Caco-2 (cell line): ENCODE measurements at regions of chr20 and their contacts with region 1.

Region 1: GRCh38 chr20:15930311-15931305 is 642.6 kb downstream of the KIF16B start:
- DNase-seq: peak in 1 of 2 experiments; percentile 43
- H3K4me3 ChIP-seq: no peak overlapping the region
- H3K4me3 Mint-ChIP-seq: no peak overlapping the region
- H3K27ac Mint-ChIP-seq: no peak overlapping the region
- H3K4me1 ChIP-seq: no peaks in the 10 kb centered on the region
- H3K4me1 Mint-ChIP-seq: peaks cover 7% of the 10 kb centered on the region
- H3K27me3 ChIP-seq: no peaks in the 10 kb centered on the region
- H3K27me3 Mint-ChIP-seq: no peaks in the 10 kb centered on the region
- CTCF ChIP-seq: peak; percentile 53 to 67

Region 2: DNA sequence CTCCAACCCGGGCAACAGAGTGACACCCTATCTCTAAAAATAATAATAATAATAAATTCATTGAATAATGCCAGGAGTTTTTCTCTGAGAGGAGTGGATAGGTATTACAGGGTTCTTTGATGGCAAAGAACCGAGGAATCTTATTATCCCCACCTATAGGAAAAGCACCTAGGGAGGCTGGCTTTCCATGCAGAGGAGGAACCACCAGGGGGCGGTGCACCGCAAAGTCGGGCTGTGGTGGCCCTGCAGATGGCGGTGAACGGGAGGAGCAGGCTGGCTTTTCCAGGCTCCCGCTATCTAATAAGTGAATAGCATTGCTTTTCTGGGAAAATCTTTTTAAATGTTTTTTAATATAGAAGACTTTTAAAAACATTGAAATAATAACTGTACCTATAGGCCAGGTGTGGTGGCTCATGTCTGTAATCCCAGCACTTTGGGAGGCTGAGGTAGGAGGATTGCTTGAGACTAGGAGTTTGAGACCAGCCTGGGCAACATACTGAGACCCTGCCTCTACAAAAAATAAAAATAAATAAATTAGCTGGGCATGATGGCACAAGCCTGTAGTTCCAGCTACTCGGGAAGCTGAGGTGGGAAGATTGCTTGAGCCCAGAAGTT is 221.5 kb before region 1 on chr20:
- CTCF ChIA-PET with region 1: no interaction called
- POLR2A ChIA-PET with region 1: no interaction called
- intact Hi-C with region 1: loop called (anchors 10 kb)
- DNase-seq: peak; percentile 43 to 62
- H3K4me3 ChIP-seq: no peak overlapping the region
- H3K4me3 Mint-ChIP-seq: no peak overlapping the region
- H3K27ac Mint-ChIP-seq: no peak overlapping the region
- H3K4me1 ChIP-seq: peaks cover 8% of the 10 kb centered on the region; the same call in 1 of the 2 replicates
- H3K4me1 Mint-ChIP-seq: peaks cover 14% of the 10 kb centered on the region
- H3K27me3 ChIP-seq: no peaks in the 10 kb centered on the region
- H3K27me3 Mint-ChIP-seq: no peaks in the 10 kb centered on the region
- CTCF ChIP-seq: peak; percentile 30 to 45

Region 3: DNA sequence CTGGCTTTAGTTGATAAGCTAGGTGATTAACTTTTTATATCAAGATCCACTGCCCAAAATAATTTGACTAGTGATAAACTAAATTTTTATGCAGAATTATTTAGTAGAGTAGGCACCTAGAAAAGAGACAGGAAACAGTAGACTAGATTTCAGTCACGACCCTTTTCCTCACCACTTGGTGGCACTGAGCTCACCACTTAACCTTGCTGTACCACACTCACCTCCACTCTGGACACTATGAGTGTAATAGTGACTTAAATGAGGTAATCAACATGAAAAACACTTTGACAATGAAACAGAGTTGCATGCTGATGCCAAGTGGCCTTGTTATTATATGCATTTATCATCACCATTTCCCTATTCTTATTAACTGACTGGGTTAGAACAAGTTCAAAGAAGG is 87.7 kb before region 1 on chr20:
- CTCF ChIA-PET with region 1: no interaction called
- POLR2A ChIA-PET with region 1: no interaction called
- intact Hi-C with region 1: loop called (anchors 5 kb)
- DNase-seq: no peak
- H3K4me3 ChIP-seq: no peak overlapping the region
- H3K4me3 Mint-ChIP-seq: no peak overlapping the region
- H3K27ac Mint-ChIP-seq: no peak overlapping the region
- H3K4me1 ChIP-seq: no peaks in the 10 kb centered on the region; the same call in 1 of the 2 replicates
- H3K4me1 Mint-ChIP-seq: no peaks in the 10 kb centered on the region
- H3K27me3 ChIP-seq: no peaks in the 10 kb centered on the region
- H3K27me3 Mint-ChIP-seq: peaks cover 3% of the 10 kb centered on the region
- CTCF ChIP-seq: peak in 1 of 2 experiments; percentile 11

Region 4: GRCh38 chr20:16241915-16242314 is 311.3 kb after region 1 on chr20:
- CTCF ChIA-PET with region 1: no interaction called
- POLR2A ChIA-PET with region 1: no interaction called
- intact Hi-C with region 1: loop called (anchors 10 kb)
- DNase-seq: peak in 1 of 2 experiments; percentile 30
- H3K4me3 ChIP-seq: no peak overlapping the region
- H3K4me3 Mint-ChIP-seq: no peak overlapping the region
- H3K27ac Mint-ChIP-seq: no peak overlapping the region
- H3K4me1 ChIP-seq: no peaks in the 10 kb centered on the region
- H3K4me1 Mint-ChIP-seq: peaks cover 6% of the 10 kb centered on the region
- H3K27me3 ChIP-seq: no peaks in the 10 kb centered on the region
- H3K27me3 Mint-ChIP-seq: no peaks in the 10 kb centered on the region
- CTCF ChIP-seq: peak in 1 of 2 experiments; percentile 17